Endothelial cell of umbilical vein (primary cell): ENCODE measurements at regions of chr17 and their contacts with region 1.

Region 1: DNA sequence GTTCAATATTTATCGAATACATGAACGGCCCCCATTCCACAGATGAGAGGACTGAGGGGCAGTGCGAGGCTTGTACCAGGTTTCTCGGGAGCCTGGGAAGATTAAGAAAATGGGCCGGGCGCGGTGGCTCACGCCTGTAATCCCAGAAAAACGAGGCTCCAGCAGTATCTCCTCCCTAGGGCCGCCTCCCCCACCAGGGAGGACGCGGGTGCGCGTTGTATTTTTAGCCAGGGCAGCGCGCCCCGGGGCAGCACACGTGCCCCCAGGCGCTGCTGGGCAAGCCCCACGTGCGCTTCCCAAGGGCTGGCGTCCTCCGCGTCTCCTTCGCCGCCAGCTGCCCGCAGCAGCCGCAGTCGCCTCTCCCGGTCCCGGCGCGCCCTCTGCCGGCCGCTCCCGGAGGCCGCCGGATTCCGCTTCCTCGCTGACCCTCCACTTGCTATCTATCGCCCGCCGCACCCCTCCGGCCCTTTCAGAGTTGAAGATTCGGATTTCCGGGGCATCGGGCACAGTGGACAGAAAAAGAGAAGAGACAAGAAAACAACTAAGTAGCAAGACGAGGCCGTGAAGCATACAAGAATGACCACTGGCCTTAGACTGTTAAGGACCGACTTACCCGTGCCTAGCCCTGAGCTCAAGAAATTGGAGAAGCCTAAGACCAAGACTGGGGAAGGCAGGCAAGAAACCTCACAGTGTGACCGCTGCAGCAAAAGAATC is 1.9 kb upstream of the YBX2 start:
- DNase-seq: peak; percentile 74
- H3K4me3 ChIP-seq: no peak overlapping the region
- H3K27ac ChIP-seq: no peak overlapping the region
- H3K4me1 ChIP-seq: peaks cover 8% of the 10 kb centered on the region
- H3K27me3 ChIP-seq: peaks cover 16 to 26% of the 10 kb centered on the region in 2 experiments
- CTCF ChIP-seq: peak; percentile 88 to 97
- POLR2A ChIP-seq: no peak

Region 2: GRCh38 chr17:7136266-7136877 is 160.0 kb before region 1 on chr17:
- CTCF ChIA-PET with region 1: interaction called, 10 read pairs
- POLR2A ChIA-PET with region 1: no interaction called
- dilution Hi-C with region 1: no loop called
- intact Hi-C with region 1: loop called (anchors 5 kb)
- DNase-seq: peak; percentile 73
- H3K4me3 ChIP-seq: no peak overlapping the region
- H3K27ac ChIP-seq: no peak overlapping the region
- H3K4me1 ChIP-seq: peaks cover 18% of the 10 kb centered on the region
- H3K27me3 ChIP-seq: peaks cover 0 to 1% of the 10 kb centered on the region in 2 experiments
- CTCF ChIP-seq: peak; percentile 79 to 89
- POLR2A ChIP-seq: no peak

Region 3: DNA sequence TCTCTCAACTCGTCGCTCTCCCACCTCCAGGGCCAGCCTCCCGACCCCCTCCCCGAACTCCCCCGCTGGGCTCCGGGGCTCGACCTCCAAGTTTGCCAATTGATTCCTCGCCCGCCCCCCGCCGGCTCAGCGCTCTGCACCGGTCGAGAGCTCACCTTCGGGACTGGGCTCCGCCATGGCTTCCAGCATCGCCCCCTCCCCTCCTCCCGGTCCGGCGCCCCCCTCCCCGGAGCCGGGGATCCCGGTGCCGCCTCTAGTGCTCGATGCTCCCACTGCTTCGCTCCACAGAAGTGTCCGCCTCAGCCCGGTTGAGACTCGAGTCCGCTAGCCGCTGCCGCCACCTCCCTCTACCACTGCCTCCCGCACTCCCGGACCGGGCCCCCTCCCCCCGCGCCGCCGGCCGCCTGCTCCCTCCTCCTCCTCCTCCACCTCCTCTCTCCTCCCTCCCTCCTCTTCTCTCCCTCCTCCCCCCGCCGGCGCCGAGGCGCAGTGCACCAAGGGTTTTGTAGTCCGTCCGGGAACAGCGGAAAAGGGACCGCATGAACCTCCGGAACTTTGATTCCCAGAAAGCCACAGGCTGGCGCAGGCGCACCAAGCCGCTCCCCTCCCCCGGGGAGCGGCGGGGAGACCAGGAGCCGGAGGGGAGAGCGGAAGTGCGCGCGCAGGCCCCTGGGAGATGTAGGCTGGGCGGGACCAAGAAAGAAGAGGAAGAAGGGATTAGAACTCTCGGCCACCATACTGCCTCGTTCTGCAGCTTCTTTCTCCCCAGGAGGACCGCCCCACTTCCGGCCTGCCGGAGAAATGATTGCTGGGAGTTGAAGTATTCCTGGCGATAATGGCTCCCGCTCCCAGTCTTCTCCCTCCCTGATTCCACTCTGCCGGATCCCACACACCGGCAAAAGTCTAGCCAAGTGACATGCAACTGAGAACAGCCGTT is 57.0 kb before region 1 on chr17 and contains the start of gene PHF23:
- CTCF ChIA-PET with region 1: interaction called, 16 read pairs
- POLR2A ChIA-PET with region 1: no interaction called
- dilution Hi-C with region 1: no loop called
- intact Hi-C with region 1: loop called (anchors 1 kb)
- DNase-seq: peak; percentile 100
- H3K4me3 ChIP-seq: peak within 1 kb of the TSS; percentile 71 to 96 (median 83)
- H3K27ac ChIP-seq: peak within 1 kb of the TSS; percentile 14
- H3K4me1 ChIP-seq: peaks cover 35% of the 10 kb centered on the region
- H3K27me3 ChIP-seq: no peaks in the 10 kb centered on the region
- CTCF ChIP-seq: no peak
- POLR2A ChIP-seq: peak; percentile 51
- total RNA-seq, gene PHF23: 54.7 and 56.2 TPM in 2 replicates

Region 4: DNA sequence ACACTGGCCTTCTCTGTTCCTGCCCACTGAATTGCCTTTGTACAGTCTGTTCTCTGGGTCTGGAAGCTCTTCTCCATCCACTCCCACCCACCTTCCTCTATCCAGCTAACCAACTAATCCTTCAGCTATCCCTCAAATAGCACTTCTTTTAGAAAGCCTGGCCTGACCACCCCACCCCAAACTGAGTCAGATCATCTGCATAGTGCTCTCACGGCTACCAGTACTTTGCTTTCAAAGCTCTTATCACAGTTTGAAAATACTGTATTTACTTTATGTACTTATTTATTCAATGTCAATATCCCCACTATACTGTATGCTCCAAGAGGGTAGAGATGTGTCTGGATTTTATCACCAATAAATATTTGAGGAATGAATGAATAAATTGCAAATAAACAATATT is 29.6 kb before region 1 on chr17:
- CTCF ChIA-PET with region 1: interaction called, 14 read pairs
- POLR2A ChIA-PET with region 1: no interaction called
- dilution Hi-C with region 1: no loop called
- intact Hi-C with region 1: no loop called
- DNase-seq: no peak
- H3K4me3 ChIP-seq: no peak overlapping the region
- H3K27ac ChIP-seq: no peak overlapping the region
- H3K4me1 ChIP-seq: peaks cover 25% of the 10 kb centered on the region
- H3K27me3 ChIP-seq: peaks cover 0 to 3% of the 10 kb centered on the region in 2 experiments
- CTCF ChIP-seq: no peak
- POLR2A ChIP-seq: no peak

Region 5: DNA sequence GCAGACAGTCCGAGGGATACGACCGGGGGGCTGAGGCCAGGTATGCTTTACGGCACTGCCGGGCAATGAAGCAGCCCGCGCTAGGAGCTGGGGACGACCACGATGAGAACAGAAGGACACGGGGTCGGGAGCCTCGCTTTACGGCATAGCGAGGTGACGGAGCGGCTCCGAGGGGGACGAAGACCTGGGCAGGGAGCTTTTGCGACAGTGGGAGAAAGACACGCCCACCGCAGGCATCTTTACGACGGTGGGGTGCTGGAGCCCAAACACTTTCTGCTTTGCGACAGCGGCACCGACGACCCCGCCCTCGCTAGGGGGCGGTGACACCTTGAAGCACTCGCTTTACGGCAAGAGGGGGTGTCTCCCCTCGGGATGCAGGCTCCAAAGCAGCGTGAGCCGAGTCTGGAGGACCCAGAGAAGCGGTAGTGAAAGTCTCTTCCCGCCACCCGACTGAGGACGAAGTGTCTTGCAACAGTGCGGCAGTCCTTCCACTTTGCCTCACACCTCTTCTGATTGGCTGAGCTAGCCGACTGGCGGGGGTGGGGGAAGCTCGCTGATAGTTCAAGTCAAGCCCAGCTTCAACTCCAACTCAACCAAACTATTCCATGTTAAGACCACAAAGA is 33.1 kb after region 1 on chr17:
- CTCF ChIA-PET with region 1: interaction called, 13 read pairs
- POLR2A ChIA-PET with region 1: no interaction called
- dilution Hi-C with region 1: no loop called
- intact Hi-C with region 1: no loop called
- DNase-seq: peak; percentile 99
- H3K4me3 ChIP-seq: peak overlapping the region; percentile 80 to 86 (median 81)
- H3K27ac ChIP-seq: peak overlapping the region; percentile 71
- H3K4me1 ChIP-seq: peaks cover 10% of the 10 kb centered on the region
- H3K27me3 ChIP-seq: peaks cover 0 to 2% of the 10 kb centered on the region in 2 experiments
- CTCF ChIP-seq: peak in 1 of 2 donors; percentile 6
- POLR2A ChIP-seq: no peak